Naive thymus-derived CD4-positive, alpha-beta T cell (primary cell): ENCODE measurements at regions of chr1 and their contacts with region 1.

Region 1: GRCh38 chr1:24930204-24931145 is at the start of gene RUNX3:
- DNase-seq: peak; percentile 87 to 94 (median 92)
- ATAC-seq: peak; percentile 90
- H3K4me3 ChIP-seq: peak within 1 kb of the TSS; percentile 91
- H3K4me3 Mint-ChIP-seq: peak within 1 kb of the TSS; percentile 85 to 98 (median 96)
- H3K27ac ChIP-seq: peak within 1 kb of the TSS; percentile 96
- H3K27ac Mint-ChIP-seq: peak within 1 kb of the TSS; percentile 71 to 98 (median 97)
- H3K4me1 ChIP-seq: peaks cover 37 to 44% of the 10 kb centered on the region in 2 donors
- H3K4me1 Mint-ChIP-seq: peaks cover 21 to 65% (median 51%) of the 10 kb centered on the region in 7 donors
- H3K27me3 ChIP-seq: no peaks in the 10 kb centered on the region
- H3K27me3 Mint-ChIP-seq: no peaks in the 10 kb centered on the region
- total RNA-seq, gene RUNX3: 71.4 to 135 (median 96.9) TPM

Region 2: DNA sequence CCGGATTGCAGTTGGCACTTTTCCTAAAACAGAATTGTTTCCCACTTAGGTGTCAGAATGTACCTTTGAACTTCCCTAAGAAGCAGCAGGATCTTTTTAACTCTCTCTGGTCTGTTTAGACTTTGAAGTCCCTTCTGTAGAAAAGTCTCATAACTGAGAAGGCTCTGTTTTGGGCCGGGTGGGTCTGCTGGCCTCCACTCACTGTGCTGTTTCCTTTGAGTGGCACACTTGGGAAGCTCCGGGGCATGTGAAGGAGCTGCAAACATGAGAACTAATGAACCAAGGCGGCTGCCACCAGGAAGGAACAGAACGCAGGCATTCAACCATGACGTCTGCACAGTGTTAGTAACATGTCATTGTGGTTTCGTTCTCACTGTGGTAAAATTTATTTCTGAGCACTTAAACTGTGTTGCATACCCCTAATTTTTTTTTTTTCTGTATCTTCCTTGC is 394.1 kb before region 1 on chr1:
- CTCF ChIA-PET with region 1: no interaction called
- POLR2A ChIA-PET with region 1: no interaction called
- intact Hi-C with region 1: loop called in 1 of 2 experiments (anchors 10 kb)
- DNase-seq: peak; percentile 41 to 92 (median 87)
- ATAC-seq: peak; percentile 90
- H3K4me3 ChIP-seq: no peak overlapping the region
- H3K4me3 Mint-ChIP-seq: peak overlapping the region; percentile 79 to 91 (median 84)
- H3K27ac ChIP-seq: peak overlapping the region; percentile 96
- H3K27ac Mint-ChIP-seq: peak overlapping the region; percentile 93 to 100 (median 99)
- H3K4me1 ChIP-seq: peaks cover 30 to 38% of the 10 kb centered on the region in 2 donors
- H3K4me1 Mint-ChIP-seq: peaks cover 29 to 90% (median 70%) of the 10 kb centered on the region in 7 donors
- H3K27me3 ChIP-seq: no peaks in the 10 kb centered on the region
- H3K27me3 Mint-ChIP-seq: no peaks in the 10 kb centered on the region

Region 3: DNA sequence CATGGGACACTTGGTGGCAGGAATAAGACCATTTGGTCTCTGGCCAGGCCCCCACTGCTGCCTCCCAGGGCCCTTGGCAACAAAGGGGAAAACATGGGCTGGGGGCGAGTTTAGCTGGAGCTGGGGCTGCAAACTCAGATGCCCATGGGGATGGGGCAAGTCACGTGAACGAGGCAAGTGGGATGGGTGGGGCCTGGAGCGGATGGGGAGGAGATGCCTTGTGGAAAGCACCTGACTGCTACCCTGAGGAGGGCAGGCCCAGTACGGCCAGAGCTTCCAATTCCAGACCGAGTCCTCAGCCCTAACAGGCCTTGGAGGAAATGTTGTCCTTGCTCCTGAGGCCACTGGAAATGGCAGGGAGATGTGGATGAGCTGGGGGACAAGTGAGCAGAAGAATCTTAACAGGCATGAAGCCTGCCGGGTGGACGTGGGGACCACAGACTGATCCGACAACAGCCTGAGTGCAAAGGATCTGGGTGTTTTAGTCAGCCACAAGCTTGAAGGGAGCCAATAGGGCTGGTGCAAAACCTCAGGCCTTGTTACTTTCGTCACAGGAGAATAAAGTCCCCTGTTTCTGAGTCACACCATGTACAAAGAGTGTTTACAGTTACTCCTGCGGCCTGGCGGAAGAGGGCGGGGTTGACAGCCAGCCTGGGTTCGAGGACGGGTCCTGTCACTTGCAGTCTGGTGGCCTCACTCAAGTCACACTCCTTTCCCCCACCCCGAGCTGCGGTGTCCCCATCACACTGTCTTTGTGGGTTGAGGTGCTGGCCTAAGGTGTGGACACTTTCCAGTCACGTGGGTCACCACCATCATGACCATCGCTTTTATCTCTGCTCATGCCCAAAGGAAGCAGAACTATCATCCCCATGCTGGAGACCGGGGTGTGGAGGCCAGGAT is 19.5 kb before region 1 on chr1:
- CTCF ChIA-PET with region 1: interaction called, 10 read pairs
- POLR2A ChIA-PET with region 1: interaction called, 26 read pairs
- intact Hi-C with region 1: loop called in 1 of 2 experiments (anchors 1 kb)
- DNase-seq: peak in 5 of 9 donors; percentile 28 to 65 (median 43)
- ATAC-seq: peak; percentile 84
- H3K4me3 ChIP-seq: peak overlapping the region; percentile 28
- H3K4me3 Mint-ChIP-seq: peak overlapping the region in 2 of 10 donors; percentile 34 to 63
- H3K27ac ChIP-seq: peak overlapping the region; percentile 72
- H3K27ac Mint-ChIP-seq: peak overlapping the region; percentile 71 to 93 (median 87)
- H3K4me1 ChIP-seq: peaks cover 5 to 95% of the 10 kb centered on the region in 2 donors
- H3K4me1 Mint-ChIP-seq: peaks cover 26 to 75% (median 47%) of the 10 kb centered on the region in 7 donors
- H3K27me3 ChIP-seq: no peaks in the 10 kb centered on the region
- H3K27me3 Mint-ChIP-seq: no peaks in the 10 kb centered on the region

Region 4: DNA sequence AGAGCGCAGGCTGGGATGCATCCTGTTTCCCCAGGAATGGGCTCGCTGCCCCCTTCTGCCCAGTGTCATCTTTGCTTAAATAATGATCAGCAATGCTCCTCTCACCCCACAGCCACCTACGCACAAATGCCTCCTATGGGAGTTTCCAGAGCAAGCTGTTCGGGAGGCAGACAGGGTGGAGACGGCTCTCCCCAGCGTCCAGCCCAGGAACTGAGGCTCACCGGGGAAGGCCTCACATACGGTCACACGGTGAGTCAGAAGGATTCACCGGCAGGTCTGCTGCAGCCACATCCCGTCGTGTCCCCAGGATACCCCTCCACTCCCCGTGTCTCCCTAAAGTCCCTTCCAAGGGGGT is 39.9 kb after region 1 on chr1:
- CTCF ChIA-PET with region 1: interaction called, 3 read pairs
- POLR2A ChIA-PET with region 1: interaction called, 18 read pairs
- intact Hi-C with region 1: loop called in 1 of 2 experiments (anchors 1 kb)
- DNase-seq: no peak
- ATAC-seq: no peak
- H3K4me3 ChIP-seq: no peak overlapping the region
- H3K4me3 Mint-ChIP-seq: peak overlapping the region in 9 of 10 donors; percentile 5 to 78 (median 59)
- H3K27ac ChIP-seq: peak overlapping the region; percentile 35
- H3K27ac Mint-ChIP-seq: peak overlapping the region; percentile 14 to 97 (median 85)
- H3K4me1 ChIP-seq: peaks cover 23 to 47% of the 10 kb centered on the region in 2 donors
- H3K4me1 Mint-ChIP-seq: peaks cover 31 to 81% (median 66%) of the 10 kb centered on the region in 7 donors
- H3K27me3 ChIP-seq: no peaks in the 10 kb centered on the region
- H3K27me3 Mint-ChIP-seq: no peaks in the 10 kb centered on the region

Region 5: GRCh38 chr1:25031966-25032667 is 101.6 kb after region 1 on chr1:
- CTCF ChIA-PET with region 1: interaction called, 135 read pairs
- POLR2A ChIA-PET with region 1: interaction called, 24 read pairs
- intact Hi-C with region 1: loop called (anchors 1 kb)
- DNase-seq: peak in 7 of 9 donors; percentile 55 to 86 (median 76)
- ATAC-seq: peak; percentile 72
- H3K4me3 ChIP-seq: peak overlapping the region; percentile 0
- H3K4me3 Mint-ChIP-seq: peak overlapping the region; percentile 39 to 92 (median 74)
- H3K27ac ChIP-seq: peak overlapping the region; percentile 77
- H3K27ac Mint-ChIP-seq: peak overlapping the region in 8 of 9 donors; percentile 87 to 97 (median 93)
- H3K4me1 ChIP-seq: peaks cover 72 to 97% of the 10 kb centered on the region in 2 donors
- H3K4me1 Mint-ChIP-seq: peaks cover 56 to 78% (median 74%) of the 10 kb centered on the region in 7 donors
- H3K27me3 ChIP-seq: no peaks in the 10 kb centered on the region
- H3K27me3 Mint-ChIP-seq: no peaks in the 10 kb centered on the region

Region 6: GRCh38 chr1:25204797-25205480 is 274.5 kb after region 1 on chr1:
- CTCF ChIA-PET with region 1: interaction called, 4 read pairs
- POLR2A ChIA-PET with region 1: no interaction called
- intact Hi-C with region 1: loop called (anchors 2 to 10 kb)
- DNase-seq: peak in 6 of 9 donors; percentile 34 to 61 (median 52)
- ATAC-seq: peak; percentile 82
- H3K4me3 ChIP-seq: no peak overlapping the region
- H3K4me3 Mint-ChIP-seq: no peak overlapping the region
- H3K27ac ChIP-seq: no peak overlapping the region
- H3K27ac Mint-ChIP-seq: no peak overlapping the region
- H3K4me1 ChIP-seq: no peaks in the 10 kb centered on the region
- H3K4me1 Mint-ChIP-seq: no peaks in the 10 kb centered on the region
- H3K27me3 ChIP-seq: no peaks in the 10 kb centered on the region
- H3K27me3 Mint-ChIP-seq: peaks cover 0 to 38% (median 0%) of the 10 kb centered on the region in 5 donors